Activated CD8-positive, alpha-beta T cell treated with anti-CD3 and anti-CD28 coated beads, Interleukin-2, amount 10 ng/mL, durations not matched to agents 7 days and 5 days (primary cell): ENCODE measurements at regions of chr3 and their contacts with region 1.

Region 1: GRCh38 chr3:10263646-10264363 is 15.5 kb downstream of the TATDN2 start:
- DNase-seq: peak; percentile 77
- ATAC-seq: peak; percentile 97
- H3K4me3 Mint-ChIP-seq: peak overlapping the region; percentile 63
- H3K27ac Mint-ChIP-seq: peak overlapping the region; percentile 78
- H3K4me1 Mint-ChIP-seq: peaks cover 63% of the 10 kb centered on the region
- H3K27me3 Mint-ChIP-seq: no peaks in the 10 kb centered on the region

Region 2: DNA sequence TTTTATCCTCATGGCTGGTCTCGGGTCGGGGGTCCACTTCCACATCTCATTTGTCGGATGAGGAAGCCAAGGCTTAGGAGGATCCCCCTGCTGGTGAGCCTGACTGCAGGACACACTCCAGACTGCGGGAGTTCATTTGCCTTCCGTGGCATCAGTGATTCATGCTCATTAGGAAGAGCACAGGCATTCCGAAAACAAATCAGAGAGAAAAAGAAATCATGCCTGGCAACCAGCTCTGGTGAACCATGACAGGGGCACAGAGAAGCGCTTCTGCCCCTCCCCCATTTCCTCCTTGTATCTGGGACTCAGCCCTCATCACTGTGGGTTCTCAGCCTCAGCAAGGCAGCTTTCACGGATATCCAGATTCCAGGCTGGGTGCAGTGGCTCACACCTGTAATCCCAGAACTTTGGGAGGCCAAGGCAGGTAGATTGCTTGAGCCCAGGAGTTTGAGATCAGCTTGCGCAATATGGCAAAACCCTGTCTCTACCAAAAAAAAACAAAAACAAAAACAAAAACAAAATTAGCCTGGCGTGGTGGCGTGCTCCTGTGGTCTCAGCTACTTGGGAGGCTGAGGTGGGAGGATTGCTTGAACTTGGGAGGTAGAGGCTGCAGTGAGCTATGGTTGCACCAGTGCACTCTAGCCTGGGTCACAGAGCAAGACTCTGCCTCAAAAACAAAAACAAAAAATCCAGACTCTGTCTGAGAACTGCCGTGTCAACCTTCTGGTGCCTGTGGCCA is 70.7 kb before region 1 on chr3:
- CTCF ChIA-PET with region 1: interaction called, 10 read pairs
- POLR2A ChIA-PET with region 1: no interaction called
- DNase-seq: peak; percentile 70
- ATAC-seq: no peak
- H3K4me3 Mint-ChIP-seq: peak overlapping the region; percentile 53
- H3K27ac Mint-ChIP-seq: peak overlapping the region; percentile 97
- H3K4me1 Mint-ChIP-seq: peaks cover 81% of the 10 kb centered on the region
- H3K27me3 Mint-ChIP-seq: no peaks in the 10 kb centered on the region

Region 3: DNA sequence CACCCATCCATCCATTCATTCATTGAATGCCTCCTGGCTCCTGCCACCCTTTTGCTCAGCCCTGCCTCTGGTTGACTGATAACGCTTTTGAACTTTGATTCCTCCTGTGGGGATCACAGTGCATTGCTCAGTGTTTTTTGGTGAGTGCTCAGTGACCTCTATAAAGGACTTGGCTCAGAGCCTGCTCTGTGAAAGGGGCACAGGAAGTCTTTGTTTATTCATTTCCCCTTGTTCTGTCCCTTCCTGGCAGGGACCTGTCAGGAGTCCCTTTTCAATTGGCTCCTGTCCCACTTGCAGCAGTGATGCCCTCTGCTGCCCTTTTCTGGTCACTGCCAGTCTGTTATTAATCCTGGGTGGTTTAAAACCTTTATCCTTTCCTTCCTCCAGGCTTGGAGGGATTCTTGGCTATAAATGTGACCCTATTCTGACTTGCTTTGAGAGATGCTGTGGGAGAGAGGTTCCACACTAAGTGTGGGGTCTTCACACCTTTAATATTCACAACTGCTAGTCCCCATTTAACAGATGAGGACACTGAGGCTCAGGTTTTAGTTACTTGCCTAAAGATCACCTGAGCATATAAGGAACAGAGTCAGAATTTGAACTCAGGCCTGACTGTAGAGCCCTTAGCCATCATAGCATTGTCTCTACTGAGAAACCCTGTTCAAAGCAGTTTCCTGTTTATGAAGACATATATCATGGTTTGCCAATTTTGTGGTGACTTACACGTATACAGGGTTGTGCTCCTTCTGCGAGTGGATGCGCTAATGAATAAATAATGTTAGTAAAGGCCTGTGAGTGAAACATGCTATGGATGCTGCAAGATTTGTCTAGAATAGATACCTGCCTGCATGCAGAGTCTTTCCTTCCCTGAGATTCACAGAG is 38.8 kb before region 1 on chr3:
- CTCF ChIA-PET with region 1: interaction called, 10 read pairs
- POLR2A ChIA-PET with region 1: interaction called, 4 read pairs
- DNase-seq: peak; percentile 79
- ATAC-seq: peak; percentile 41
- H3K4me3 Mint-ChIP-seq: peak overlapping the region; percentile 36
- H3K27ac Mint-ChIP-seq: peak overlapping the region; percentile 74
- H3K4me1 Mint-ChIP-seq: peaks cover 84% of the 10 kb centered on the region
- H3K27me3 Mint-ChIP-seq: no peaks in the 10 kb centered on the region

Region 4: DNA sequence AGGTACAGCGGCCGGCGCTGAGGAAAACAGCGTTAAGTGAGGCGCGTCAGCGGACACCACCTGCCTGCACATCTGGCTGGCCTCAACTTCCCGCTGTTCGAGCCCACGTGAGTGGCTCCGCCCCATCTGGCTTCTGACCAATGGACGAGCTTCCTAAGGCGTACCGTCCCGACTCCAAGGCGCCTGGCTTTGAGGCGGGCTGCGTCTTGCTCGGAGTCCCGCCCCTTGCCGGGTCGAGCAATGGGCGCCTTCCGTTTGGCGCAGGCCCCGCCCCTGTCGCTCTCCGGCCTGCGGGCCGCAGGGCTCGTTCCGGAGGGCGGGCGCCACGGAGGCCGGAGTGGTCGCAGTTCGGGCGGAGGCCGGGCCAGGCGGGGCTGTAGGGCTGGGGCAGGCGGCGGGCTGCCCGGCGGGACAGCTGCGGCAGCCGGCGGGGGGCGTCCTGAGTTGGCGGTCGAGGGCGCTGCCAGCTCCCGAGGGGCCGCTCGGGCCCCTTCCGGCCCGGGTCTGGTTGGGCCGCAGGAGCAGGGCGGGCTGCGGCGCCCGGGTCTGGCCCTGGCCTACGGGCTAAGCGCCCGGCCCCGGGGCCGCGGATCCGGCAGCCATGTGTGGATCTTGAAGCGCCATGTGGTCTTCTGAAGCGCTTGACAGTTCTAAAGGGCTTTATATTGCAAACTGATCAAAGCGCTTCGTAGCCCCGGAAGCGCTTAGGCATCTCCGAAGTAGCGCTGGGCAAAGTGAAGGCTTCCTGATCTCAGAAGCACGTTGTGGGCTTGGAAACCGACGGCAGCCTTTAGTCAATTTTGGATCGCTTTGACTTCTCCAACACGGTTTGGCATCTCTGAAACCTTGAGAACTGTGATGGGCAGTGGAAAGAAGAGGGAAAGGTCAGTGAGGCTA is 15.4 kb before region 1 on chr3 and contains the start of gene TATDN2:
- CTCF ChIA-PET with region 1: interaction called, 22 read pairs
- POLR2A ChIA-PET with region 1: interaction called, 12 read pairs
- DNase-seq: peak; percentile 97
- ATAC-seq: peak; percentile 94
- H3K4me3 Mint-ChIP-seq: peak within 1 kb of the TSS; percentile 89
- H3K27ac Mint-ChIP-seq: peak within 1 kb of the TSS; percentile 95
- H3K4me1 Mint-ChIP-seq: peaks cover 41% of the 10 kb centered on the region
- H3K27me3 Mint-ChIP-seq: no peaks in the 10 kb centered on the region
- total RNA-seq, gene TATDN2: 57.0 to 61.6 TPM

Region 5: DNA sequence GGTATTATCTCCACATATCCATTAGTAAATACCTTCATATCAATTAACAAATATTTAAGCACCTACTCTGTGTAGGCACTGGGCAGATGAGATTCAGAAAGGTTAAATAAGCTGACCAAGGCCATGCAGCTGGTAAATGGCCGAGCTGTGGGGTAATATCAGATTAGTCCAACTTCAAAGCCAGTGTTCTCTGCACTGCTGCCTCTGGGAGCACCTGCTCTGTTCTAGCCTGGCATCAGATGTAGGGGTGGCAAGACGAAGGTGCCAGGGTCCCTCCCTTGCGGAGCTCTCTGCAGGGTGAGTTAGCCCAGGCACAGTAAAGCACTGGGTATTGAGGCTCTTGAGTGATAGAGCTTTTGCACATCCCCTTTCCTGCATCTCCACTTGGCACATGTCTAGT is 10.1 kb before region 1 on chr3:
- CTCF ChIA-PET with region 1: interaction called, 22 read pairs
- POLR2A ChIA-PET with region 1: interaction called, 12 read pairs
- DNase-seq: no peak
- ATAC-seq: no peak
- H3K4me3 Mint-ChIP-seq: no peak overlapping the region
- H3K27ac Mint-ChIP-seq: peak overlapping the region; percentile 4
- H3K4me1 Mint-ChIP-seq: peaks cover 63% of the 10 kb centered on the region
- H3K27me3 Mint-ChIP-seq: no peaks in the 10 kb centered on the region

Region 6: GRCh38 chr3:10286596-10287330 is 23.0 kb after region 1 on chr3:
- CTCF ChIA-PET with region 1: interaction called, 53 read pairs
- POLR2A ChIA-PET with region 1: interaction called, 3 read pairs
- DNase-seq: peak; percentile 62
- ATAC-seq: peak; percentile 61
- H3K4me3 Mint-ChIP-seq: no peak overlapping the region
- H3K27ac Mint-ChIP-seq: peak overlapping the region; percentile 4
- H3K4me1 Mint-ChIP-seq: peaks cover 20% of the 10 kb centered on the region
- H3K27me3 Mint-ChIP-seq: no peaks in the 10 kb centered on the region